CD8-positive, alpha-beta T cell (primary cell): ENCODE measurements at regions of chr7 and their contacts with region 1.

Region 1: GRCh38 chr7:100428967-100429636 is 529 bp upstream of the MEPCE start:
- DNase-seq: peak; percentile 100
- ATAC-seq: peak; percentile 64
- H3K4me3 ChIP-seq: peak overlapping the region; percentile 69 to 96
- H3K4me3 Mint-ChIP-seq: peak overlapping the region; percentile 100
- H3K27ac ChIP-seq: peak overlapping the region; percentile 99 to 100
- H3K27ac Mint-ChIP-seq: peak overlapping the region; percentile 100
- H3K4me1 ChIP-seq: peaks cover 34% of the 10 kb centered on the region
- H3K4me1 Mint-ChIP-seq: peaks cover 42% of the 10 kb centered on the region
- H3K27me3 ChIP-seq: no peaks in the 10 kb centered on the region
- H3K27me3 Mint-ChIP-seq: no peaks in the 10 kb centered on the region
- CTCF ChIP-seq: no peak

Region 2: GRCh38 chr7:99551767-99552463 is 877.2 kb before region 1 on chr7 and contains the start of gene FAM200A:
- CTCF ChIA-PET with region 1: no interaction called
- POLR2A ChIA-PET with region 1: no interaction called
- intact Hi-C with region 1: loop called in 1 of 2 experiments (anchors 10 kb)
- DNase-seq: peak; percentile 70 to 96 (median 87)
- ATAC-seq: peak; percentile 97
- H3K4me3 ChIP-seq: peak within 1 kb of the TSS; percentile 84 to 99
- H3K4me3 Mint-ChIP-seq: peak within 1 kb of the TSS; percentile 90
- H3K27ac ChIP-seq: peak within 1 kb of the TSS; percentile 91 to 99
- H3K27ac Mint-ChIP-seq: peak within 1 kb of the TSS; percentile 96
- H3K4me1 ChIP-seq: peaks cover 27% of the 10 kb centered on the region
- H3K4me1 Mint-ChIP-seq: peaks cover 39% of the 10 kb centered on the region
- H3K27me3 ChIP-seq: no peaks in the 10 kb centered on the region
- H3K27me3 Mint-ChIP-seq: no peaks in the 10 kb centered on the region
- CTCF ChIP-seq: no peak
- total RNA-seq, gene FAM200A: 2.7 to 3.3 TPM

Region 3: GRCh38 chr7:100119062-100119700 is 309.9 kb before region 1 on chr7 and contains the starts of genes CNPY4 and TAF6:
- CTCF ChIA-PET with region 1: no interaction called
- POLR2A ChIA-PET with region 1: interaction called, 3 read pairs
- intact Hi-C with region 1: loop called (anchors 1 to 10 kb)
- DNase-seq: peak; percentile 86 to 97 (median 96)
- ATAC-seq: peak; percentile 69
- H3K4me3 ChIP-seq: peak within 1 kb of the TSS; percentile 80 to 93
- H3K4me3 Mint-ChIP-seq: peak within 1 kb of the TSS; percentile 99
- H3K27ac ChIP-seq: peak within 1 kb of the TSS; percentile 88 to 93
- H3K27ac Mint-ChIP-seq: peak within 1 kb of the TSS; percentile 93
- H3K4me1 ChIP-seq: peaks cover 17% of the 10 kb centered on the region
- H3K4me1 Mint-ChIP-seq: peaks cover 28% of the 10 kb centered on the region
- H3K27me3 ChIP-seq: no peaks in the 10 kb centered on the region
- H3K27me3 Mint-ChIP-seq: no peaks in the 10 kb centered on the region
- CTCF ChIP-seq: no peak
- total RNA-seq, gene CNPY4: 21.4 to 24.4 TPM
- total RNA-seq, gene TAF6: 24.9 to 31.6 TPM

Region 4: GRCh38 chr7:100342765-100343164 is 86.3 kb before region 1 on chr7:
- CTCF ChIA-PET with region 1: no interaction called
- POLR2A ChIA-PET with region 1: interaction called, 8 read pairs
- intact Hi-C with region 1: loop called in 1 of 2 experiments (anchors 2 kb)
- DNase-seq: no peak
- ATAC-seq: no peak
- H3K4me3 ChIP-seq: no peak overlapping the region
- H3K4me3 Mint-ChIP-seq: no peak overlapping the region
- H3K27ac ChIP-seq: peak overlapping the region in 1 of 2 experiments; percentile 28
- H3K27ac Mint-ChIP-seq: peak overlapping the region; percentile 77
- H3K4me1 ChIP-seq: peaks cover 9% of the 10 kb centered on the region
- H3K4me1 Mint-ChIP-seq: peaks cover 23% of the 10 kb centered on the region
- H3K27me3 ChIP-seq: no peaks in the 10 kb centered on the region
- H3K27me3 Mint-ChIP-seq: no peaks in the 10 kb centered on the region
- CTCF ChIP-seq: no peak

Region 5: DNA sequence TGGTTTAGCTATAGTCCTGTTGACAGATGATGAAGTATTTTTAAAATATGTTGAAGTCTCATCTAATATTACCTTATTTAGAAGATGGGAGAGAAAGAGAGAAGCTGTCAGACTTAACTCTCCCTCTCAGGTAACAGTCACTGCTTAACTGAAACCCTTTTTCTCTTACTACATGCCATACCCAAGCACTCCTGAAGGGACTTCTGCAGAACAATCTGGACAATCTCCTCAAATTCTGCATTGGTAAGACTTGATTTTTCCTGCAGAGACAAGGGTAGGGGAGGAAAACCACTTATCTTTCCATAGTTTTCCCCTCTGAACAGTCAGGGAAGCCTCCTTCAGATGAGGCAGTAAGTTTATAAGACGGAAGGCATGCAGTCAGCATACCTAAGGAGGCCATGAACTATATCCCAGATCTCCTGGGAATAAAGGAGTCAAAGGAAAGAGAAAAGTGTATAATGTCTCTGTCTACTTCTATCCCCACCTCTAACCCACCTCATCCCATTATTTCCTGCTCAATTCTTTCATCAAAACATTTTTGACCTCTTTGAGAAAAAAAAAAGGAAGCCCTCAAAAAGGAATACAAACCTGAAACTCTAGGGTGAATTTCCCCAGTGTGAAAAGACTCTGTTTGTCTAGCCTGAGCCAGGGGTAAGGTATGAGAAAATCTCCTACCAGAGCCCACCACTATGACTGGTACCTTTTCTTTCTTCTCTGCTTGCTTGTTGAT is 10.0 kb before region 1 on chr7:
- CTCF ChIA-PET with region 1: no interaction called
- POLR2A ChIA-PET with region 1: no interaction called
- intact Hi-C with region 1: no loop called
- DNase-seq: no peak
- ATAC-seq: no peak
- H3K4me3 ChIP-seq: no peak overlapping the region
- H3K4me3 Mint-ChIP-seq: no peak overlapping the region
- H3K27ac ChIP-seq: no peak overlapping the region
- H3K27ac Mint-ChIP-seq: no peak overlapping the region
- H3K4me1 ChIP-seq: no peaks in the 10 kb centered on the region
- H3K4me1 Mint-ChIP-seq: no peaks in the 10 kb centered on the region
- H3K27me3 ChIP-seq: no peaks in the 10 kb centered on the region
- H3K27me3 Mint-ChIP-seq: no peaks in the 10 kb centered on the region
- CTCF ChIP-seq: no peak

Region 6: GRCh38 chr7:100586266-100587025 is 157.3 kb after region 1 on chr7 and contains the start of gene FBXO24:
- CTCF ChIA-PET with region 1: interaction called, 3 read pairs
- POLR2A ChIA-PET with region 1: interaction called, 32 read pairs
- intact Hi-C with region 1: loop called in 1 of 2 experiments (anchors 1 kb)
- DNase-seq: peak; percentile 98 to 100 (median 99)
- ATAC-seq: peak; percentile 80
- H3K4me3 ChIP-seq: peak within 1 kb of the TSS; percentile 93 to 96
- H3K4me3 Mint-ChIP-seq: peak within 1 kb of the TSS; percentile 96
- H3K27ac ChIP-seq: peak within 1 kb of the TSS; percentile 74 to 94
- H3K27ac Mint-ChIP-seq: peak within 1 kb of the TSS; percentile 57
- H3K4me1 ChIP-seq: peaks cover 22% of the 10 kb centered on the region
- H3K4me1 Mint-ChIP-seq: peaks cover 39% of the 10 kb centered on the region
- H3K27me3 ChIP-seq: no peaks in the 10 kb centered on the region
- H3K27me3 Mint-ChIP-seq: peaks cover 3% of the 10 kb centered on the region
- CTCF ChIP-seq: no peak
- total RNA-seq, gene FBXO24: 0.30 to 0.53 TPM

Region 7: DNA sequence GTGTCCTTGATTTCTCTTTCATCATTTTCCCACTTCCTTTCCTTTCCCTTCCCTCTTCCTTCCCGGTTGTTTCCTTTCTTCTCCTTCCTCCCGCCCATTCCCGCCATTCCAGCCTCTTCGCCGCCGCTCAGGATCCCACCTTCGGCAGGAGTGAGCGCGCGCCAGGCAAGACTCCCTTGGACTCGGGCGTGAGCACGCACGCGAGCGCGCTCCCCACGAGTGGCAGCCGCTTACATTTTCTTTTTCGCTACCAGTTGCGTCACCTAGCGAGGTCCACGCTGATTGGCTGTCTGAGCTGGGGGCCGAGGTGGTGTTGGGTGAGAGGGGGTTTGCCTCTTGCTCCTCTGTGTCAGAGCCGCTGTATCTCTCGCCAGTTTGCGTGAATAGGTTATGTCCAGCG is 316.1 kb after region 1 on chr7:
- CTCF ChIA-PET with region 1: no interaction called
- POLR2A ChIA-PET with region 1: no interaction called
- intact Hi-C with region 1: no loop called
- DNase-seq: peak in 3 of 9 experiments; percentile 24 to 37 (median 28)
- ATAC-seq: no peak
- H3K4me3 ChIP-seq: no peak overlapping the region
- H3K4me3 Mint-ChIP-seq: peak overlapping the region; percentile 72
- H3K27ac ChIP-seq: no peak overlapping the region
- H3K27ac Mint-ChIP-seq: no peak overlapping the region
- H3K4me1 ChIP-seq: no peaks in the 10 kb centered on the region
- H3K4me1 Mint-ChIP-seq: peaks cover 2% of the 10 kb centered on the region
- H3K27me3 ChIP-seq: peaks cover 0 to 2% of the 10 kb centered on the region in 2 experiments
- H3K27me3 Mint-ChIP-seq: peaks cover 28% of the 10 kb centered on the region
- CTCF ChIP-seq: no peak

Region 8: DNA sequence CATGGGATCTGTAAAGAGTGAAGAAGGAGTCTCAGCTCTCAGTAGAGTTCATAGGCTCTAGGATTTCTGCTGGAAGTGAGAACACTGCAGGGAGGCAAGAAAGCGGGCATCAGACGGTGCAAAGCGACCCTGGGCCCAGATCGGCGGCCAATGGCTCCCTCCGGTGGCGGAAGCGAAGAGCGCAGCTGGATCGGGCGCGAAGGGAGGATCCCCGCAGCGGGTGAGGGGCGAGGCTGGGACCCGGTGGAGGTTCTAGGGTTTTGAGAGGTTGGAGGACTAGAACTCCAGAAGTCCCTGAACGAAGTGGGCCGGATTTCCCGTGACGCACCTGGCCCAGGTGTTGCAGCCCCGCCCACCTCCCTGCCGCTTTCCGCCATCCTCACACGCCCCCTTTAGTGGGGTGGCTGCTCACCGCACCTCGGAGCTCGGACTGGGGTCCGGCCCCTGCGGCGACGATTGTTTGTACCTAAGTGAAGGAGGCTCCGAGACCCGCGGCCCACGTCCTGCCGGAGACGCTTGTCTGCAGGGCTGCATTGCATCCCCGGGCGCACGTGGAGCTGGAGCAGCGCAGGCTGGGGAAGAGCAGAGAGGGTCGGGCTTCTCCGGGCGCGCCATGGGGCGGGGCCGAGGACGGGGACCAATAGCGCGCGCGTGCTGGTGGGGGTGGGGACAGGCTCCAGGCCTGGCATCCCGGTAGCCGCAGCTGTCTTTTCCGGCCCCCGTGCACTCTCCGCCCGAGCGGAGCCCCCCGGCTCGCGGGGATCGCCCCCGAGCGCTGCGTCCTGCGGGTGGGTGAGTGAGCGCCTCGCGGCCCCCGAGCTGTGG is 423.2 kb after region 1 on chr7 and contains the start of gene SLC12A9:
- CTCF ChIA-PET with region 1: no interaction called
- POLR2A ChIA-PET with region 1: no interaction called
- intact Hi-C with region 1: loop called in 1 of 2 experiments (anchors 10 kb)
- DNase-seq: peak; percentile 67 to 93 (median 85)
- ATAC-seq: peak; percentile 92
- H3K4me3 ChIP-seq: peak within 1 kb of the TSS; percentile 84 to 98
- H3K4me3 Mint-ChIP-seq: peak within 1 kb of the TSS; percentile 88
- H3K27ac ChIP-seq: peak within 1 kb of the TSS; percentile 42 to 64
- H3K27ac Mint-ChIP-seq: peak within 1 kb of the TSS; percentile 90
- H3K4me1 ChIP-seq: peaks cover 18% of the 10 kb centered on the region
- H3K4me1 Mint-ChIP-seq: peaks cover 20% of the 10 kb centered on the region
- H3K27me3 ChIP-seq: no peaks in the 10 kb centered on the region
- H3K27me3 Mint-ChIP-seq: no peaks in the 10 kb centered on the region
- CTCF ChIP-seq: peak; percentile 85
- total RNA-seq, gene SLC12A9: 23.4 to 26.6 TPM